ENCODE measurements at regions of chr11 and their contacts with region 1.

Region 1: GRCh38 chr11:118263695-118264567 is at the start of gene MPZL2:
- DNase-seq: peak; percentile 50
- H3K4me3 Mint-ChIP-seq: peak within 1 kb of the TSS; percentile 72
- H3K27ac Mint-ChIP-seq: peak within 1 kb of the TSS; percentile 58
- H3K4me1 Mint-ChIP-seq: peaks cover 56% of the 10 kb centered on the region
- H3K27me3 Mint-ChIP-seq: peaks cover 30% of the 10 kb centered on the region

Region 2: GRCh38 chr11:118277306-118277705 is 13.4 kb after region 1 on chr11:
- CTCF ChIA-PET with region 1: interaction called, 22 read pairs
- DNase-seq: peak; percentile 33
- H3K4me3 Mint-ChIP-seq: no peak overlapping the region
- H3K27ac Mint-ChIP-seq: no peak overlapping the region
- H3K4me1 Mint-ChIP-seq: peaks cover 56% of the 10 kb centered on the region
- H3K27me3 Mint-ChIP-seq: peaks cover under 1% of the 10 kb centered on the region